ENCODE measurements at regions of chr20 and their contacts with region 1.

Region 1: DNA sequence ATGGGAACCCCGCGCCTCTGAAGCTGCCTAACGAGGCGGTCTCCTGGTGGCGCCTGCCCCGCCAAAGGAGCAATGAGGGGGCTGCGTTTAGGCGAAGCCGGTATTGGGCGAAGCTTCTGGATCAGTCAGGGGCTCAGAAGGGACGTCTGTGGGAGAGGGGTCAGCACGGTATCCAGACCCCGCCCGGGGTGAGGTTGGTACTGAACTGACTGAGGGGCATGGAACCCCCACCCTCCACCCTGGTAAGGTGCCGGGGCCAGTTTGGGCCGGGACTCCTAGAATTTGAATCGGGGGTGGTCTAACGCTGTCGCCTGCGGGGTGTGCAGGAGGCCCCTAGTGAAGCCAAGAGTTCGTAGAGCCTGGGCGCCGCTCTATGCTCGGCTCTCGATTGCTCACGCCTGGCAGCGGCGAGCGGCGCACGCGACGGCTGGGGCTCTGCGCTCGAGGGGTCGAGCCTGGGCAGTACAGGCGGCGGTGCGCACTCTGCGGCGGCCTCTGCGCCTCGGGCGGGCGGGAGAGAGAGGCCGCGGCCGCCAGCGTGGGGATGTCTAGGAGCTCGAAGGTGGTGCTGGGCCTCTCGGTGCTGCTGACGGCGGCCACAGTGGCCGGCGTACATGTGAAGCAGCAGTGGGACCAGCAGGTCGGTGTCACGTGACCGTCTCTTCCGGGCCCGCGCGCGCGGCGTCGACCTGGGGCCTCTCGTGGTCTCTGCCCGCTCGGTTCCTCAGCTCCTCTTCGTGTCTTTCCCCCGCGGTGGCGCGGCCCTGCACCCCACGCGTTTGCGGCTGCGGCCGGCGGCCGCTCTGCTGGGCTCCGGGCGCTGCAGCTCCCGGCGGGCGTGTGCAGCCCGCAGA is at the starts of genes KAT14 and PET117:
- DNase-seq: peak; percentile 95
- ATAC-seq: peak; percentile 88
- H3K4me3 ChIP-seq: peak within 1 kb of the TSS; percentile 92
- H3K27ac ChIP-seq: peak within 1 kb of the TSS; percentile 69
- H3K4me1 ChIP-seq: peaks cover 33% of the 10 kb centered on the region
- H3K27me3 ChIP-seq: no peaks in the 10 kb centered on the region
- CTCF ChIP-seq: no peak
- total RNA-seq, gene KAT14: 10.8 and 12.5 TPM in 2 replicates
- total RNA-seq, gene PET117: 21.2 and 31.2 TPM in 2 replicates

Region 2: GRCh38 chr20:18056174-18057100 is 81.2 kb before region 1 on chr20:
- CTCF ChIA-PET with region 1: no interaction called
- POLR2A ChIA-PET with region 1: no interaction called
- intact Hi-C with region 1: loop called (anchors 2 kb)
- DNase-seq: peak; percentile 60
- ATAC-seq: peak; percentile 41
- H3K4me3 ChIP-seq: peak overlapping the region; percentile 90
- H3K27ac ChIP-seq: peak overlapping the region; percentile 4; the same call in 1 of the 2 replicates
- H3K4me1 ChIP-seq: peaks cover 29% of the 10 kb centered on the region
- H3K27me3 ChIP-seq: 0 out of 2 replicates have a peak, but pooled peaks cover 4% of the 10 kb centered on the region
- CTCF ChIP-seq: no peak

Region 3: GRCh38 chr20:18072532-18072931 is 65.1 kb before region 1 on chr20:
- CTCF ChIA-PET with region 1: no interaction called
- POLR2A ChIA-PET with region 1: no interaction called
- intact Hi-C with region 1: no loop called
- DNase-seq: no peak
- ATAC-seq: no peak
- H3K4me3 ChIP-seq: no peak overlapping the region
- H3K27ac ChIP-seq: no peak overlapping the region
- H3K4me1 ChIP-seq: no peaks in the 10 kb centered on the region
- H3K27me3 ChIP-seq: no peaks in the 10 kb centered on the region
- CTCF ChIP-seq: no peak

Region 4: DNA sequence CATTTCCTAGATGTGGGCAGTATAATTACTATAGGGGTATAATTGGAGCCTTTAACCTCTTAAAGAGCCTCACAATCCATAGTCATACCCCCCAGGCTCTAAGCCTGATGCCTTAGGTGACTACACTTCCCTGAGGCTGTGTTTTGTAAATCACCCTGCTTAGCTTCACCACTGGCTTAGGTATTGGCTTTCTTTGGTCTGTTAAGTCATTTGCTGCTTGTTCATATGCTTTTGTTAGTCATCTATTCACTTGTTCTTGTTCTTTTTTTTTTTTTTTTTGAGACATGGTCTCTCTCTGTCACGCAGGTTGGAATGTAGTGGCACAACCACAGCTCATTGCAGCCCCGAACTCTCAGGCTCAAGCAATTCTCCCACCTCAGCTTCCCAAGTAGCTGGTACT is 26.7 kb after region 1 on chr20:
- CTCF ChIA-PET with region 1: no interaction called
- POLR2A ChIA-PET with region 1: no interaction called
- intact Hi-C with region 1: no loop called
- DNase-seq: peak; percentile 76
- ATAC-seq: no peak
- H3K4me3 ChIP-seq: no peak overlapping the region
- H3K27ac ChIP-seq: peak overlapping the region; percentile 28
- H3K4me1 ChIP-seq: peaks cover 11% of the 10 kb centered on the region; the same call in 1 of the 2 replicates
- H3K27me3 ChIP-seq: no peaks in the 10 kb centered on the region
- CTCF ChIP-seq: no peak

Region 5: GRCh38 chr20:18287915-18288748 is 150.5 kb after region 1 on chr20 and contains the start of gene ZNF133:
- CTCF ChIA-PET with region 1: no interaction called
- POLR2A ChIA-PET with region 1: interaction called, 5 read pairs
- intact Hi-C with region 1: loop called (anchors 2 kb)
- DNase-seq: peak; percentile 98
- ATAC-seq: peak; percentile 97
- H3K4me3 ChIP-seq: peak within 1 kb of the TSS; percentile 98
- H3K27ac ChIP-seq: peak within 1 kb of the TSS; percentile 76
- H3K4me1 ChIP-seq: peaks cover 22% of the 10 kb centered on the region
- H3K27me3 ChIP-seq: no peaks in the 10 kb centered on the region
- CTCF ChIP-seq: peak; percentile 27; the same call in 1 of the 2 replicates
- total RNA-seq, gene ZNF133: 16.3 and 17.1 TPM in 2 replicates

Region 6: GRCh38 chr20:18587665-18588573 is 450.3 kb after region 1 on chr20 and contains the start of gene DTD1:
- CTCF ChIA-PET with region 1: no interaction called
- POLR2A ChIA-PET with region 1: no interaction called
- intact Hi-C with region 1: no loop called
- DNase-seq: peak; percentile 96
- ATAC-seq: peak; percentile 90
- H3K4me3 ChIP-seq: peak within 1 kb of the TSS; percentile 75
- H3K27ac ChIP-seq: peak within 1 kb of the TSS; percentile 61
- H3K4me1 ChIP-seq: peaks cover 14% of the 10 kb centered on the region; the same call in 1 of the 2 replicates
- H3K27me3 ChIP-seq: no peaks in the 10 kb centered on the region
- CTCF ChIP-seq: peak; percentile 73
- total RNA-seq, gene DTD1: 101 and 124 TPM in 2 replicates